CD4-positive, alpha-beta T cell (primary cell): ENCODE measurements at regions of chr5 and their contacts with region 1.

Region 1: GRCh38 chr5:159198063-159199036 is 11.0 kb downstream of the RNF145 start:
- DNase-seq: peak in 4 of 14 experiments; percentile 7 to 64 (median 52)
- ATAC-seq: peak; percentile 90
- H3K4me3 ChIP-seq: no peak overlapping the region
- H3K4me3 Mint-ChIP-seq: peak overlapping the region; percentile 2
- H3K27ac ChIP-seq: peak overlapping the region in 1 of 2 donors; percentile 43
- H3K27ac Mint-ChIP-seq: peak overlapping the region; percentile 45
- H3K4me1 ChIP-seq: peaks cover 19% of the 10 kb centered on the region
- H3K4me1 Mint-ChIP-seq: peaks cover 83% of the 10 kb centered on the region
- H3K27me3 ChIP-seq: no peaks in the 10 kb centered on the region
- H3K27me3 Mint-ChIP-seq: no peaks in the 10 kb centered on the region
- CTCF ChIP-seq: no peak

Region 2: GRCh38 chr5:159178978-159179377 is 19.4 kb before region 1 on chr5:
- CTCF ChIA-PET with region 1: interaction called, 3 read pairs
- POLR2A ChIA-PET with region 1: interaction called, 10 read pairs
- intact Hi-C with region 1: loop called in 1 of 2 experiments (anchors 2 kb)
- DNase-seq: peak in 5 of 14 experiments; percentile 13 to 77 (median 22)
- ATAC-seq: peak; percentile 70
- H3K4me3 ChIP-seq: no peak overlapping the region
- H3K4me3 Mint-ChIP-seq: peak overlapping the region; percentile 2
- H3K27ac ChIP-seq: peak overlapping the region in 1 of 2 donors; percentile 64
- H3K27ac Mint-ChIP-seq: peak overlapping the region; percentile 87
- H3K4me1 ChIP-seq: peaks cover 12% of the 10 kb centered on the region
- H3K4me1 Mint-ChIP-seq: peaks cover 89% of the 10 kb centered on the region
- H3K27me3 ChIP-seq: no peaks in the 10 kb centered on the region
- H3K27me3 Mint-ChIP-seq: no peaks in the 10 kb centered on the region
- CTCF ChIP-seq: no peak